Left ventricle myocardium superior (tissue), 1 donor: ENCODE measurements at regions of chr5 and their contacts with region 1.

Region 1: DNA sequence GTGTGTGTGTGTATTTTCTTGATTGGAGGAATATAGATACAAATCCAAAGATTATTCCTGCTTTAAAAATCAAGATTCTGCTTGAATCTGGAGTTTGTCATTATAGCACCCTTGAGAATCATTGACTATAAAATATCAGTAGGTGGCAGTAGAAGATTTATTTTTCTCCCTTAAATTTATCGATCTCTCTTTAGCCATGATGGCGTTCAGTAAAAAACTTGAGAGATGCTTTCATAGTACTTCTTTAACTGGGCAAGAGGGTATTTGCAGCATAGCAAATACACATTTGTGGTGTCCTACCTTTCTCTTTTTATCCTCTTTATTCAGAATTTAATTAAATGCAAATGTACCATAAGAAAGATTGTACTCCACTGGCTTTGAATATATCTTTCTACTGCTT is 307.7 kb downstream of the ADGRV1 start:
- DNase-seq: no peak
- ATAC-seq: peak; percentile 54

Region 2: DNA sequence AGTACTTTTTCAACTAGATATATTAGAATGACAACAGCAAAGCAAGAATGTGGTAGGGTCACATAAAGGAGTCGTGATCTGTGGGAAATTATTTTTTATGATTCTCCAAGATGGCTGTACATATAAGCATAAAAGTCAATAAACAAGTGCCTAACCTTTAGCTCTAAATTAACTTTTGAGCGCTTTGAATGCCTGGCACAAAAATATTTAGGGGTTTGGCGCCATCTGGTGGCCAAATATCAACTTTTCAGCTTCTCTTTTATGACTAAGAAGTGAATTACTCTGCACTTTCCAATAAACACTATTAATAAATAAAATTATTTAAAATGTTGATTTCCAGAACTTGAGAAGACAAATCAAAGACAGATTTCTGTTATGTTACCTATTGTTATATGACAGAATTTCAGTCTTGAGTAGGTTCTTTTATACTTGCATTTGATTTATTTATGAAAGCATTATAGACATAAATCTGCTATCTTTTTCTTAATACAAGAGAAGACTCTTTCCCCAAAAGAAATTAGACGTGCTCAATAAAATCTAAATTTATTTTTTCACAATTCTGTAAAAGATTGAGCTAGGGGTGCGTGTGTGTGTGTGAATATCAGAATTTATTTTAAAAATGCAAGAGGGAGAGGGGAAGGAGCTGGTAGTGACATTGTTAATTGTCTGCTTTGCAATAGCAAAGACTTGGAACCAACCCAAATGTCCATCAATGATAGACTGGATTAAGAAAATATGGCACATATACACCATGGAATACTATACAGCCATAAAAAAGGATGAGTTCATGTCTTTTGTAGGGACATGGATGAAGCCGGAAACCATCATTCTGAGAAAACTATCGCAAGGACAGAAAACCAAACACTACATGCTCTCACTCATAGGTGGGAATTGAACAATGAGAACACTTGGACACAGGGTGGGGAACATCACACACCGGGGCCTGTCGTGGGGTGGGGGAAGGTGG is 553.5 kb after region 1 on chr5:
- intact Hi-C with region 1: loop called (anchors 5 kb)
- DNase-seq: peak; percentile 47
- ATAC-seq: no peak